Right ventricle myocardium superior (tissue), 1 donor: ENCODE measurements at regions of chr9 and their contacts with region 1.

Region 1: GRCh38 chr9:71768388-71769174 is at the start of gene CEMIP2:
- DNase-seq: peak; percentile 93
- ATAC-seq: peak; percentile 93
- total RNA-seq, gene CEMIP2: 7.9 TPM

Region 2: DNA sequence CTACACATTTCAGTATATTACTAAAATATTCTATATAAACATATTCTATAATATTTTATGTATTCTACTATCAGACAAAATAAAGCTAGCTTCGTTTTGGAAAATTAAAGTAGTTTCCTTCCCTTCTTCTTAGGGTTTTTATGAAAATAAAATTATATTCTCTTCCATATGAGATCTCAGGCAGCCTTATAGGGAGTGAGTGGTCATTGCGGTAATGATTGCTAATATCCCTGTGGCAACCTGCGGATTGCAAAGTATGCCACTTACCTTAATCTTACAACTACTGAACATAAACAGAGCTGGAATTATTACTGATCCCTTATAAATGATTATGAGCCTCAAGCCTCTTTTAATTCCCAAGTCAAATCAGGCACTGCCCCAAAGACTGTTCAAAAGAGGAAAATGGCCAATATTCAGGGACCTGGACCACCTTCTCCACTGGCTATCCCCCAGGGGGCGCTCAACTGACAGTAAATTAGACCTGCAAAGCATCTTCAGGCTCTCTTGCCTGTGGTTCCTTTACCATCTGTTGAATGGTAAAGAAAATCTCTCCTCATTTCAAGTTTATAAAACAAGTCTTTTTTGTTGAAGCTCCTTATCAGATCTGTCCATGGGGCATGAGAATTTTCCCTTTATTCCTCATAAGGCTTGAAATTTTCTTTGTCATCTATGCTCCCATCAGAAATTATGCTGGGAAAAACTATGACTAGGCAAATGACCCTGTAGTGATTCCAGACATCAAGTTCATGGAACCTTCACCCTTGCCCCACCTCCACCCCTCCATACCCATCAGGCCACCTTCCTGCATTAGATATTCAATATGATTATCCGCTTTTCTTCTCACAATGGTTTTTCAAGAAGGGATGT is 164.2 kb before region 1 on chr9:
- intact Hi-C with region 1: loop called (anchors 10 kb)
- DNase-seq: peak; percentile 74
- ATAC-seq: peak; percentile 84